ENCODE measurements at regions of chr13 and their contacts with region 1.

Region 1: DNA sequence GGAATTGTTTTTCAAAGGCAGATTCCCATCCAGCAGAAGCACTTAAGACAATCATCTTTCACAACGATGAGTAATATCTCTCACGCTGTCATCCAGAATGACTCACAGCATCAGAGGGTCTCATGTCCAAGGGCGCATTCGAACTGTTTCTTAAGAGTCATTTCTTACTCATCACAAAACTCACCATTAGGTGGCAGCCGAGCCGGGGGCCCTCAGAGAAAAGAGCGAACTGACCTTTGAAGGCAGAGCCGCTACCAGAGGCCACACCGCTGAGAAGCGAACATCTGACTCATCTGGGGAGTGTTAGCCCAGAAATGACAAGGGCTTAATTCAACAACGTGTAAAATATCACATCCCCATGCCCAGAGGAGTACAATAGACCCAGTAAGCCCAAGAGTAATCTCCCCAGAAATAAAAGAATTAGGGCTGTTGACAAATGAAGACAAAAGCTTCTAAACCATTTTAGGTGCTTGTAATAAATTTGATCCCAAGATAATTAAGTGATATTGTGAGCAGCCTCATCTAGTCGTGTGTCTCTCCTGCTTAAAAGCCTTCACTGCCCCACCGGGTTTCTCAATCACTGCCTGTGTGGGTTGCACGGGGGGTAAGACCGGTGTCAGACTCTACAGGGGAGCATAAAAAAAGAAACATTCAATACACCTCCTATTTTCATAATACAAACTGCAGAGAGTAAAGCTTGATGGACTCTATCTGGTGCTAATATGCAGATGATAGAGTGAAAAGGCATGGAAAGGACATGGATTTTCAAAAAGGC is 96.2 kb downstream of the CYSLTR2 start:
- DNase-seq: peak; percentile 86

Region 2: DNA sequence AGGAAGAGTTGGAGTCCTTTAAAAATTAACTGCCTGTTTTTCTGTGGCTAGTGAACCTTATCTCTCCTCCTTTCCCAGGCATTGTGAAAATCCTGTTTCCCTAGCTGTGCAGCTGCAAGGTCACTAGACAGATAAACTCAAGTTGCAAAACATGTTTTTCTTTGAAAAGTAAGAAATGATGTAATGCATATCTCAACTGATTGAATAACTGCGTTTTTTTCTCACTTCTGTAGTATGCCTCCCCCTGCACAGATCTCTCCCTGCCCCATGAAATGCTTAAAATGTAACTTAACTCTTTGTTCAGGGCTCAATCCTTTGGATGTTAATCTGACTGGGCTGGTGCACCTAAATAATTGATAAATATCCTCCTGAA is 123.8 kb before region 1 on chr13:
- intact Hi-C with region 1: loop called (anchors 10 kb)
- DNase-seq: no peak